Gastrocnemius medialis (tissue), 4 donors: ENCODE measurements at regions of chr3 and their contacts with region 1.

Region 1: DNA sequence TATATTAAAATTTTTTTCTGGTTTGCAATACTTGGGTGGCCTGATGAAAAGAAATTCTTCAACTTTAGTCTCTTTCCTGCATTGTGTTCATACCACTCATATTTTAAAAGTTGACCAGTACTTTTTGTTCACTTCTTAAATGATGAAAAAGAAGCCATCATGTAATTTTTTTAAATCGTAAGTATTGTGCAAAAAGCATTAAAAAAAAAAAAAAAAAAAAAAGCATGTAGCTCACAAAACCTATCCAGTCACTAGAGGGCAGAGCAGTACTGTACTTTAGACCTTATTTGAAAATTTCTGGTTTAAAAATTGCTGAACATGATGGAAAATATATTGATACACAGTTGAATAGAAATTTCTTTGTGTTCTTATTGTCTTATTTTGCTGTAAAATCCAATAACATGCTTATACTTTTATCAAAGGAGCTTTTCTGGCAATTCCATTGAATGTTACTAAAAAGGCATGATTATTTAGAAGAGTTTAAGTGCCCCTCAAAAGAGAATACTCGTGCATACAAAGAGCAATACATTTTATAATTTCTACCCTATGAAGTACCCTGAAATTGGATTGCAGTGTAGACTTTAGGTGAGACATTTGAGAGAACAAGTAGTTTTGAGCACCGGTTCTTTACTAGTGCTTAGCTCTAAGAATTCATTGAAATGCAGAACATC is 137.7 kb downstream of the BBX start:
- DNase-seq: no peak
- ATAC-seq: no peak
- H3K4me3 ChIP-seq: no peak overlapping the region
- H3K27ac ChIP-seq: no peak overlapping the region
- H3K4me1 ChIP-seq: peaks cover 19 to 24% of the 10 kb centered on the region in 2 donors
- H3K27me3 ChIP-seq: no peaks in the 10 kb centered on the region
- CTCF ChIP-seq: peak; percentile 14 to 66 (median 31)
- POLR2A ChIP-seq: no peak

Region 2: GRCh38 chr3:107574650-107575049 is 85.8 kb before region 1 on chr3:
- in situ Hi-C with region 1: no loop called
- intact Hi-C with region 1: loop called (anchors 10 kb)
- DNase-seq: no peak
- ATAC-seq: peak; percentile 65 to 75
- H3K4me3 ChIP-seq: no peak overlapping the region
- H3K27ac ChIP-seq: no peak overlapping the region
- H3K4me1 ChIP-seq: no peaks in the 10 kb centered on the region
- H3K27me3 ChIP-seq: no peaks in the 10 kb centered on the region
- CTCF ChIP-seq: peak; percentile 20 to 58 (median 39)
- POLR2A ChIP-seq: no peak

Region 3: GRCh38 chr3:107676469-107677309 is 16.2 kb after region 1 on chr3:
- in situ Hi-C with region 1: no loop called
- intact Hi-C with region 1: loop called (anchors 2 kb)
- DNase-seq: no peak
- ATAC-seq: no peak
- H3K4me3 ChIP-seq: no peak overlapping the region
- H3K27ac ChIP-seq: no peak overlapping the region
- H3K4me1 ChIP-seq: peaks cover 0 to 11% of the 10 kb centered on the region in 2 donors
- H3K27me3 ChIP-seq: no peaks in the 10 kb centered on the region
- CTCF ChIP-seq: peak; percentile 32 to 70 (median 55)
- POLR2A ChIP-seq: no peak

Region 4: DNA sequence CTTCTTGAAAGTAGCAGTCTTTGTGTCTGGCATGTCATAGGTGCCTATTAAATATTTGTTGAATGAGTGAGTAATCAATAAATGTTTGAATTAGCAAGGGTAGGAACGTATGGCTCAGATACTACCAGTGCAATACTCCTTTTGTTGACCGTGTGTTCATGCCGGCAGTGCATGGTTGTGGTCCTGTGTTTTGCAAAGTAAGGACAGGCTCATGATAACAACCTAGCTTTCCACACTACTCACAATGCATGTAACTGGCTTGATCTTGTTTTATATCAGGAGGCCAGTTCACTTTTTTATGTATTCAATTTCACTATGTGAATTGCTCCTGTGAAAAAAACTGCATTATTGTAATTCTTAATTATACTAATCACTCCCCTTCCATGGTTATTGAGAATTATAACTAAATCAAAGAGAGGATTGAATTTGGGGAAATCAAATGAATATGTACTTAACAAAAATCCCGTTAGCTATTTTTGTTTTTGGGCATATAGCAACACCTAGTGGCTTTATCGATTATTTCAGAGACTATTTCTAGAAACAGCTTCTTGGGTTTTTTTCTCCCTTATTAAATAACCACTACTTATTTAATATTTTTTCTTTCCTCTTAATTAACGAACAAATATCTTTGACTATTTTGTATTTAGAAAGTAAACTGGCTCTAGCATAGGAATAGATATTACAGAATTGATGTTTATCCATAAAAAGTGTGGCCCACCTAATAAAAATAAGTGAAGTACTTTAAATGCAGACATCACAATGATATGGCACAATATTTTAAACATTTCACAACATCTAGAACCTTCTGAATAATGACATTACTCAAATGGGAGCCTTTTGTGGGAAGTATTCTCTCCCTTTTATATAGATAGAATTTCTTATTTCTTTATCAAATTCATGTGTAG is 80.8 kb after region 1 on chr3:
- in situ Hi-C with region 1: no loop called
- intact Hi-C with region 1: loop called (anchors 1 kb)
- DNase-seq: no peak
- ATAC-seq: no peak
- H3K4me3 ChIP-seq: no peak overlapping the region
- H3K27ac ChIP-seq: no peak overlapping the region
- H3K4me1 ChIP-seq: no peaks in the 10 kb centered on the region
- H3K27me3 ChIP-seq: no peaks in the 10 kb centered on the region
- CTCF ChIP-seq: peak; percentile 25 to 67 (median 59)
- POLR2A ChIP-seq: no peak

Region 5: DNA sequence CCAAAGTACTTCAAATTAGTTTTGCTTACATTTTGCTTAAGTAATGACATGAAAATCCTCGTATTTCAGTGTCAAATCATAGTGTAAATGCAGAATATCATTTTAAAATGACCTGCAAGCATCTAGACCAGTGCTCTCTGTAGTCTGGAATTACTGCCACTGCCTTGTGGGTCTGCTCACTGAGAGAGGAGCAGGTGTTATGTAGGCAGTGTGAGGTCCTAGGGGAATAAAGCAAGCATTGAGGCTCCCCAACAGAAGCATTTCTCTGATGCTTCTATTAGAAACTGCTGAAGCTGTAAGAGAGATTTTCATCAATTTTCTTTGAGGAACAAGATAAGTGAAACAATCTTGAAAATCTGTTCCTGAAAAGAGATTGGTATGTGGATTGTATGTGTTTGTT is 115.5 kb after region 1 on chr3:
- in situ Hi-C with region 1: no loop called
- intact Hi-C with region 1: no loop called
- DNase-seq: no peak
- ATAC-seq: no peak
- H3K4me3 ChIP-seq: no peak overlapping the region
- H3K27ac ChIP-seq: no peak overlapping the region
- H3K4me1 ChIP-seq: no peaks in the 10 kb centered on the region
- H3K27me3 ChIP-seq: no peaks in the 10 kb centered on the region
- CTCF ChIP-seq: no peak
- POLR2A ChIP-seq: no peak

Region 6: DNA sequence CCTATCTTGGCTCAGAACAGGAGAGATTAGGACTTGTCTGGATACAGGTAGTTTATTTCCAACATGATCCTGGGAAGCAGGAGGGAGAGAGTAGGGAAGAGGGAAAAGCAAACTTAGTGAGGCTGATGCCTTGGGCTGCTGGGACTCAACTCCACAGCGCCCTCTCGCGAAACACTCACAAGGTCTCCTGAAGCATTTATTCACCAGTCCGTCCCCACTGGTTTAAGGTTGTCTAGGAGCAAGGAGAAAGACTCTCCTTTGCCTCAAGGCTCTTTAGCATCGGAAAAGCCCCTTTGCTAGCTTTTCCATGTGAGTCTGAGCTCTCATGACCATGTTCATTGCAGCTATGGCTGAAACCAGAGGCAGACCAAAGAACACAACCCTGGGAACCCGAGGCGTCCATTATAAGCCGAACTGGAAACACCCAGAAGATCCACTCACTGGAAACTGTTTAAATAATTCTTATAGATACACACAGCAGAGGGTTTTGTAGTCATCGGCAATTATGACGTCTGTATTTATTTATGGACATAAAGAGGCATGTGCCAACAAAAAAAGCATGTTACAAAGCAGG is 185.9 kb after region 1 on chr3:
- in situ Hi-C with region 1: no loop called
- intact Hi-C with region 1: loop called (anchors 5 kb)
- DNase-seq: peak in 1 of 2 donors; percentile 20
- ATAC-seq: no peak
- H3K4me3 ChIP-seq: no peak overlapping the region
- H3K27ac ChIP-seq: no peak overlapping the region
- H3K4me1 ChIP-seq: no peaks in the 10 kb centered on the region
- H3K27me3 ChIP-seq: no peaks in the 10 kb centered on the region
- CTCF ChIP-seq: peak in 3 of 5 experiments; percentile 22 to 41 (median 29)
- POLR2A ChIP-seq: no peak

Region 7: DNA sequence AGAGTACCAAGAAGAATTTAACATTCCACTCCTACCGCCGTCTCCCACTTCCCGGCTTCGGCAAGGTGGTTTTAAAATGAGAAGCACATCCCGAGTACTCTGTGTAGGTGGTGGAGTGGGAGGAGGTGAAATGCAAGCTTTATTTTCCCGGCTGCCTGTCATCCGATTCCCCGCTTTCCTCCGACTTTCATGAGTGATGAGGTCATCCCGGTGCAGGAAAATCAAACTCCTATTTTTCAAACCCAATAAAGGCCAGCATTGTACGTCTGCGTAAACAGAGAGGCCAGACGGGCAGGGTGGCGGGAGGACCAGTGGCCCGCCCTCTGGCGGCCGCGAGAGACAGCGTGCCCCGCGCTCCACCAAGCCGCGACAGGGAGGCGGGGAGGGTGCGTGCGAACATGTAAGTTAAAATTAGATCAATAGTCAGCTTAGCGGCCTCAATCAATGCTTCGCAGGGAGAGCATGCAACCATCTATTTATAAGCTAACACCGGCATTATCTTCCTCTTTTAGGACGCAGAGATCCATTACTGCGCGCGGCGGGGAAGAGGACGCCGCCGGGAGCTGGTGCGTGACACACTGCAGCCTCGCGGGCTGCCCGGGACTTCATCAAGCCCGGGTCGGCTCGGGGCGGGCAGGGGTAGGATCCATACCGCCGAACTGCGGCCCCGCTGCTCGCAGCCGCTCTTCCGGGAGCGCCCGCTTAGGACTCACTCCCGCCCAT is 267.1 kb after region 1 on chr3:
- in situ Hi-C with region 1: no loop called
- intact Hi-C with region 1: loop called (anchors 5 kb)
- DNase-seq: peak; percentile 13 to 29
- ATAC-seq: peak; percentile 91 to 93
- H3K4me3 ChIP-seq: peak overlapping the region; percentile 55 to 76 (median 60)
- H3K27ac ChIP-seq: no peak overlapping the region
- H3K4me1 ChIP-seq: peaks cover 0 to 14% of the 10 kb centered on the region in 2 donors
- H3K27me3 ChIP-seq: no peaks in the 10 kb centered on the region
- CTCF ChIP-seq: peak; percentile 69 to 93 (median 78)
- POLR2A ChIP-seq: no peak